Breast epithelium (tissue), 4 donors: ENCODE measurements at regions of chr17 and their contacts with region 1.

Region 1: GRCh38 chr17:68759343-68760132 is 158.4 kb upstream of the FAM20A start:
- DNase-seq: peak; percentile 85 to 86
- H3K4me3 ChIP-seq: peak overlapping the region; percentile 27 to 55 (median 37)
- H3K27ac ChIP-seq: peak overlapping the region; percentile 78 to 79
- H3K4me1 ChIP-seq: no peaks in the 10 kb centered on the region
- H3K27me3 ChIP-seq: no peaks in the 10 kb centered on the region
- CTCF ChIP-seq: peak; percentile 70 to 91 (median 91)
- POLR2A ChIP-seq: no peak

Region 2: GRCh38 chr17:67629971-67630320 is 1129.6 kb before region 1 on chr17:
- intact Hi-C with region 1: loop called (anchors 10 kb)
- DNase-seq: no peak
- H3K4me3 ChIP-seq: no peak overlapping the region
- H3K27ac ChIP-seq: no peak overlapping the region
- H3K4me1 ChIP-seq: no peaks in the 10 kb centered on the region
- H3K27me3 ChIP-seq: no peaks in the 10 kb centered on the region
- CTCF ChIP-seq: peak in 1 of 3 donors; percentile 29
- POLR2A ChIP-seq: no peak

Region 3: DNA sequence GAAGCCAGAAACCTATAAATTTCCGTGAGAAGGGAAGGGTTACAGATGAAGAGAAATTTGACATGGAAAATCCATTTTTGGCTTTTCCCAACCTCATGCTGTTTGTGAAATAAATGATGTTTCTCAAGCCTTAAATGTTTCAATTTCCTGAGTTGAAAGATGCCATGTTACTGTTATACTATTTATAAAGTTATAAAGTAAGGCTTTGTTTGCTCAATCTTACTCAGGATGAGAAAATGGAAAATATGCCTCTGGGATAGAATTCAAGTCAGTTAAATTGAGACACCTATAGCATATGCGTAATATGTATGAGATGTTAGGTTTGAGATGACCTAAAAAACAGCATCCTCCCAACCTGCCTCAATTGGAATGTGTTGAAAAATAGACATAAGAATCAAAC is 138.5 kb before region 1 on chr17:
- intact Hi-C with region 1: loop called (anchors 5 kb)
- DNase-seq: no peak
- H3K4me3 ChIP-seq: no peak overlapping the region
- H3K27ac ChIP-seq: no peak overlapping the region
- H3K4me1 ChIP-seq: no peaks in the 10 kb centered on the region
- H3K27me3 ChIP-seq: no peaks in the 10 kb centered on the region
- CTCF ChIP-seq: no peak
- POLR2A ChIP-seq: no peak

Region 4: DNA sequence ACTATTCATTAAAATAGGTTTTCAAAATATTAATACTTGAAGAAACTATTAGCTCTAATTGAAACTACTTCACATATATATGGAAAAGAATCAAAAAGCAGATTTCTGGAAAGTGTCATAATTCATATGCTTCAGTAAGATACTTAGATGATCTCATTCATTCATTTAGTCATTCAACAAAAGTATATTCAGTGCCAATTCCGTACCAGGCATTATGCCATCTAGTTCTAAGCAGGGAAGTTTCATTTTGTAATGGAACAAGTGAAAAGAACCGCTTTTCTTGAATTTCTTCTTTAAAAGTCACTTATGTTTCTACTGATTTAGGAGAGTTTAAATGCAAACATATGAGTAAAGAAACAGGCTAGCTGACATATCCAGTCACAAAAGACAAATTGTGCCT is 40.1 kb before region 1 on chr17:
- intact Hi-C with region 1: no loop called
- DNase-seq: no peak
- H3K4me3 ChIP-seq: no peak overlapping the region
- H3K27ac ChIP-seq: no peak overlapping the region
- H3K4me1 ChIP-seq: no peaks in the 10 kb centered on the region
- H3K27me3 ChIP-seq: no peaks in the 10 kb centered on the region
- CTCF ChIP-seq: no peak
- POLR2A ChIP-seq: no peak